Activated CD4-positive, alpha-beta T cell treated with anti-CD3 and anti-CD28 coated beads, Interleukin-2, amount 10 ng/mL, durations not matched to agents 7 days and 5 days (primary cell): ENCODE measurements at regions of chr9 and their contacts with region 1.

Region 1: DNA sequence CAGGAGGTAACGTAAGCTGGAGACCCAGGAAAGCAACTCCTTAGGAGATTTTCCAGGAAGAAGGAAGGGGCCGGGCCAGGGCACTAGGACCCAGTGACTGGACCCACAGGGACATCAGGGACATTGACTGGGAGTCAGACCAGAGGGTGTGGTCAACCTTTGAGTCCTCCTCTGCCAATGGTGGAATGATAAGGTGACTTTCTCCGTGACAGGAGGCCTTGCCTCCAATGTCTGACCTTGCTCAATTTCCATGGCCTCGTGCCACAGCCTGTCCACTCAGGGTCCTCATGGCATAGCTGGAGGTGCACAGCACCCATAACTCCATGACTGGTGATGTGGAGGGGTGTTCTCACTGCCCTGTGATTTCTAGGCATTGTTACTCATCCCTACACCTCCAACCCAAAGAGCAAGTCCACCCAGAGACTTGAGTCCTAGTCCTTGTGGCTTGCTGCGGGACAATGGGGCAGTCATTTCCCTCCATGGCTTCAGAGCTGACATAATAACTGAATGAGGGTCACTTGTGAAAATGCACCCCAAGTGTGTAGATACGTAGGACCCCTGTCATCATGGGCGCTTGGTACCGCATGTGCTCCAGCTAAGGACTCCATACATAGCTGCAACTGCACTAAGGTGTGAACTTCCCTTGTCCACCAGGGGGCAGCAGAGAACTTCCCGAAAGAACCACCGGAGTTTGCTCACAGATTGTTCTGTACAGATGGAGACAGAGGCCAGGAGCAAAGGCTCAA is 4.1 kb upstream of the AMBP start:
- DNase-seq: peak; percentile 88
- H3K4me3 Mint-ChIP-seq: no peak overlapping the region
- H3K27ac Mint-ChIP-seq: no peak overlapping the region
- H3K4me1 Mint-ChIP-seq: peaks cover 1% of the 10 kb centered on the region
- H3K27me3 Mint-ChIP-seq: no peaks in the 10 kb centered on the region

Region 2: DNA sequence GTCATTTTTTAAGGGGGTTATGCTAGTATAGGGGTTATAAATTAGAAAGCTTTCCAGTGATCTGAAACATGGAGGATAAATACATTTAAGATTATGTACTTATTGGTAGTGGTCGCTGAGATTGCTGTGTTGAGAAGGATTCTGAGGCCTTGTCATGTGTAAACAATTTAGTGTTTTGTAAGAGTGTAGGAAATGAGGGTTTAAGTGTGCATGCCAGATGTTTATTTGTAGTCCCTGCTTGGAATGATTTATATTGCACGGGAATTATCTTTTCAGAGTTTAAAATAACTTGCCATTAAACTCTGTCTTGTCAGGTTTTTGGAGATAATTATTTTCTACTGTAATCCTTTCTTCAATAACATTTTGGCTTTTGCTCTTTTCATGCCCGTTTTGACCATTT is 186.7 kb before region 1 on chr9:
- CTCF ChIA-PET with region 1: no interaction called
- POLR2A ChIA-PET with region 1: no interaction called
- DNase-seq: no peak
- H3K4me3 Mint-ChIP-seq: no peak overlapping the region
- H3K27ac Mint-ChIP-seq: no peak overlapping the region
- H3K4me1 Mint-ChIP-seq: no peaks in the 10 kb centered on the region
- H3K27me3 Mint-ChIP-seq: peaks cover 11% of the 10 kb centered on the region

Region 3: DNA sequence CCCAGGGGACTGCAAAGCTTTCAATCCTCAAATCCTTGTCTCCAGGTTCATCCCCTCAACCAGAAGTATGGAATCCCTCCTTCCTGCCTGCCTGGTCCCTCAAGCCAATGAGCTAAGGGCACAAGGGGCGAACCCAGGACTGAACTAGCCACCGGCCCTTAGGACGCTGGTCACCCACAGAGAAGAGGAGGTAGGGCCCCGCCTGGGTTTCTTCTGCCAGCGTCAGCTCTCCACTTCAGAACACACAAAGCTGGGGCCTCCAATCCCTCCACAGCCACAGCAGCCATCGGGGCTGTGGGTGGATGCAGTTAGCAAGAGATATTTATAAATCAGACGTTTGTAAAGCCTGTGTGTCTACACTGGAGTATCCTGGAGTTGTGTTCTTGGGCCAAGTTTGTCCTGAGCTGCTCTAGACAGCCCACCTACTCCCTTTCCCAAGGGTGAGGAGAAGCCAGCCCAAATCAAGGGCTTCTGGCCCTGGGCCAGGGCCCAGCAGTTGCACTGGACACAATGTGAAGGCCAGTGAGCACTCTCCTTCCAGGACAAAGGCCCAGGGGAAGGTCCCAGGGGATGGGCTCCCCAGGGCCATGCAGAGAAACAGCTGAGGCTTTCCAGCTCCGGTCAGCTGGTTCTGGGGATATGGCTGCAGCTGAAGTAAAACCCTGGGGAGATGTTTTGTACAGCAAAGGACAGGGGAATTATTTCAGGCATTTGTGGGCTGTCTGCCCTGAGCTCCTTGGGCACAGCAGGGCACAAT is 23.0 kb before region 1 on chr9:
- CTCF ChIA-PET with region 1: interaction called, 11 read pairs
- POLR2A ChIA-PET with region 1: no interaction called
- DNase-seq: no peak
- H3K4me3 Mint-ChIP-seq: no peak overlapping the region
- H3K27ac Mint-ChIP-seq: no peak overlapping the region
- H3K4me1 Mint-ChIP-seq: no peaks in the 10 kb centered on the region
- H3K27me3 Mint-ChIP-seq: peaks cover 10% of the 10 kb centered on the region

Region 4: GRCh38 chr9:114096041-114096511 is 13.9 kb after region 1 on chr9:
- CTCF ChIA-PET with region 1: interaction called, 13 read pairs
- POLR2A ChIA-PET with region 1: no interaction called
- DNase-seq: no peak
- H3K4me3 Mint-ChIP-seq: no peak overlapping the region
- H3K27ac Mint-ChIP-seq: no peak overlapping the region
- H3K4me1 Mint-ChIP-seq: no peaks in the 10 kb centered on the region
- H3K27me3 Mint-ChIP-seq: peaks cover 27% of the 10 kb centered on the region

Region 5: GRCh38 chr9:114174876-114175771 is 92.9 kb after region 1 on chr9:
- CTCF ChIA-PET with region 1: no interaction called
- POLR2A ChIA-PET with region 1: no interaction called
- DNase-seq: no peak
- H3K4me3 Mint-ChIP-seq: no peak overlapping the region
- H3K27ac Mint-ChIP-seq: no peak overlapping the region
- H3K4me1 Mint-ChIP-seq: no peaks in the 10 kb centered on the region
- H3K27me3 Mint-ChIP-seq: no peaks in the 10 kb centered on the region